ENCODE measurements at regions of chr6 and their contacts with region 1.

Region 1: GRCh38 chr6:142819603-142820337 is 125.2 kb downstream of the HIVEP2 start:
- DNase-seq: peak; percentile 45 to 84 (median 52)
- H3K4me3 ChIP-seq: peak overlapping the region; percentile 37 to 48
- H3K4me3 Mint-ChIP-seq: peak overlapping the region; percentile 76 to 92 (median 90)
- H3K27ac ChIP-seq: peak overlapping the region; percentile 76
- H3K27ac Mint-ChIP-seq: peak overlapping the region; percentile 87 to 100 (median 94)
- H3K4me1 ChIP-seq: peaks cover 88% of the 10 kb centered on the region
- H3K4me1 Mint-ChIP-seq: peaks cover 62 to 84% (median 71%) of the 10 kb centered on the region in 4 donors
- H3K27me3 ChIP-seq: no peaks in the 10 kb centered on the region
- H3K27me3 Mint-ChIP-seq: peaks cover 0 to 3% of the 10 kb centered on the region in 2 donors

Region 2: GRCh38 chr6:142784344-142784743 is 35.4 kb before region 1 on chr6:
- CTCF ChIA-PET with region 1: no interaction called
- POLR2A ChIA-PET with region 1: interaction called, 4 read pairs
- intact Hi-C with region 1: loop called (anchors 5 kb)
- DNase-seq: no peak
- H3K4me3 ChIP-seq: no peak overlapping the region
- H3K4me3 Mint-ChIP-seq: peak overlapping the region in 2 of 8 donors; percentile 24 to 78
- H3K27ac ChIP-seq: no peak overlapping the region
- H3K27ac Mint-ChIP-seq: peak overlapping the region; percentile 48 to 89 (median 60)
- H3K4me1 ChIP-seq: peaks cover 78% of the 10 kb centered on the region
- H3K4me1 Mint-ChIP-seq: peaks cover 40 to 73% (median 58%) of the 10 kb centered on the region in 4 donors
- H3K27me3 ChIP-seq: no peaks in the 10 kb centered on the region
- H3K27me3 Mint-ChIP-seq: no peaks in the 10 kb centered on the region

Region 3: GRCh38 chr6:142833054-142833453 is 13.3 kb after region 1 on chr6:
- CTCF ChIA-PET with region 1: interaction called, 16 read pairs
- POLR2A ChIA-PET with region 1: interaction called, 19 read pairs
- intact Hi-C with region 1: no loop called
- DNase-seq: no peak
- H3K4me3 ChIP-seq: no peak overlapping the region
- H3K4me3 Mint-ChIP-seq: peak overlapping the region in 5 of 8 donors; percentile 8 to 68 (median 38)
- H3K27ac ChIP-seq: no peak overlapping the region
- H3K27ac Mint-ChIP-seq: peak overlapping the region in 4 of 7 donors; percentile 15 to 77 (median 68)
- H3K4me1 ChIP-seq: peaks cover 53% of the 10 kb centered on the region
- H3K4me1 Mint-ChIP-seq: peaks cover 60 to 83% (median 73%) of the 10 kb centered on the region in 4 donors
- H3K27me3 ChIP-seq: no peaks in the 10 kb centered on the region
- H3K27me3 Mint-ChIP-seq: no peaks in the 10 kb centered on the region

Region 4: DNA sequence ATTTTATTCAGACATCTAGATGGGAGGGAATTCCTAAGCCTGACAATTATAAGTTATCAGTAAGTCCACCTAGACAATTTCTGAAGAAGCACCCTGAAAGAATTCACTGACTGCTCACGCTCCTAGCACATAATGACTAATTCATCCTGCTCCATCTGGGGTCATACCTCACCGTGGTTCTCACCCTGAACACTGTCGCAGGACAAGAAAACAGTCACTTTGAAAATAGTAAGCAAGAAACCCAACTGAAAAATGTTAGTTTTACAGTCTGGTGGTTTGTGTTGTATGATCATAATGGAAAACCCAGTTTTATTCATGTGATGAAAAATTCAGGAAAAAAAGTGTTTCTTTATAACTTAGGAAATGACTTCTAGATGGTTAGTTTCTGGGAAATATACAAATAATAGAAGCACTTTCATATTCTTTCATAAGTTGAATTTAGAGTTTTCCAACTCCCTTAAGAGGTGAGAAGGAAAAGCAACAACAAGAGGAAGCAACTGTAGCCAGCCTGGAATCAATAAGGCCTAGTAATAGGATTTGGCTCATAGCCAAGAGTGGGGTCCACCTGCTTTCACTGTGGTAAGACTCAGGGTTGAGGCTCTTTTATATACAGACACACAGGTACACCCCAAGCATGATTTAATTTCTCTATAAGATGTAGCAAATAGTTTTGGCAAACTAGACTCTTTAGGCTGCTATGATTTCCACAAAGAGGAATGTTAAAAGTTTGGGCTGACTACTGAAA is 31.1 kb after region 1 on chr6:
- CTCF ChIA-PET with region 1: interaction called, 7 read pairs
- POLR2A ChIA-PET with region 1: interaction called, 27 read pairs
- intact Hi-C with region 1: loop called (anchors 5 kb)
- DNase-seq: peak in 1 of 5 donors; percentile 76
- H3K4me3 ChIP-seq: no peak overlapping the region
- H3K4me3 Mint-ChIP-seq: peak overlapping the region; percentile 62 to 86 (median 78)
- H3K27ac ChIP-seq: peak overlapping the region; percentile 46
- H3K27ac Mint-ChIP-seq: peak overlapping the region; percentile 88 to 96 (median 94)
- H3K4me1 ChIP-seq: peaks cover 100% of the 10 kb centered on the region
- H3K4me1 Mint-ChIP-seq: peaks cover 83 to 100% (median 92%) of the 10 kb centered on the region in 4 donors
- H3K27me3 ChIP-seq: no peaks in the 10 kb centered on the region
- H3K27me3 Mint-ChIP-seq: no peaks in the 10 kb centered on the region

Region 5: DNA sequence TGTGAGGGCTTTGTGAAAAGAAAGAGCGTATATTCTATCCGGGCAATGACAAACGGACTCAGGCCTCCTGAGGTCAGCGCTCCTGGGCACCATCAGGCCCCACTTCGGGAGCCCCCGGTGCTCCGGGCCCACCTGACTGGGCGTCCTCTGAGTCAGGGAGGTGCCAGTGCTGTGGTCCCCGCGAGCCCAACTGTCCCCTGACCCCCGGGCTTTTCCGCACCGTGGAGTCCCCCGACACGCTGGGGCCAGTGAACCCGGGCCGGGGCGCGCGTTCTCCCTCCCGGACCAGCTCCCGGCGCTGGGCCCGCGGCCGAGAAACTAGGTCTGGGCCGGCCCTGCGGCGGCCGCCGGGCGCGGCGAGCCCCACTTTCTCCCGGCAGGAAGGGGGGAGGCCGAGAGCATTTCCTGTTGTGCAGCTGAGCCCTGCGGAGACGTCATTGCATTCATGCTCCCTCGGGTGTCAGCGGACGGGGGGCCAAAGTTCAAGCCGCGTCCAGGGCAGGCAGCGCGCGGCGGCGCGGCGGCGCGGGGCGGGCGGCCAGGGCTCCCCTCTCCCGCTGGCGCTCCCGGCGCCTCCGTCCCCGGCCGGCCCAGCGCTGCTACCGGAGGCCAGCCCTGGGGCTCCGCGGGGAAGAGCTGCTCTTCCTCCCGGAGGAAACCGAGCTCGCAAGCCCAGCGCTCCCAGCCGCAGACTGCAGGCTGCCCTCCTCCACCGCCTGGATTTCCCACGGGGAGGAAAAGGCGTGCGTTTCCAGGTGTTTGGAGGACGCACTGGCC is 106.9 kb after region 1 on chr6:
- CTCF ChIA-PET with region 1: no interaction called
- POLR2A ChIA-PET with region 1: interaction called, 13 read pairs
- intact Hi-C with region 1: no loop called
- DNase-seq: peak; percentile 82 to 87 (median 86)
- H3K4me3 ChIP-seq: peak overlapping the region; percentile 82 to 86
- H3K4me3 Mint-ChIP-seq: peak overlapping the region; percentile 88 to 99 (median 94)
- H3K27ac ChIP-seq: peak overlapping the region; percentile 98
- H3K27ac Mint-ChIP-seq: peak overlapping the region; percentile 90 to 100 (median 98)
- H3K4me1 ChIP-seq: peaks cover 60% of the 10 kb centered on the region
- H3K4me1 Mint-ChIP-seq: peaks cover 42 to 77% (median 56%) of the 10 kb centered on the region in 4 donors
- H3K27me3 ChIP-seq: no peaks in the 10 kb centered on the region
- H3K27me3 Mint-ChIP-seq: no peaks in the 10 kb centered on the region

Region 6: DNA sequence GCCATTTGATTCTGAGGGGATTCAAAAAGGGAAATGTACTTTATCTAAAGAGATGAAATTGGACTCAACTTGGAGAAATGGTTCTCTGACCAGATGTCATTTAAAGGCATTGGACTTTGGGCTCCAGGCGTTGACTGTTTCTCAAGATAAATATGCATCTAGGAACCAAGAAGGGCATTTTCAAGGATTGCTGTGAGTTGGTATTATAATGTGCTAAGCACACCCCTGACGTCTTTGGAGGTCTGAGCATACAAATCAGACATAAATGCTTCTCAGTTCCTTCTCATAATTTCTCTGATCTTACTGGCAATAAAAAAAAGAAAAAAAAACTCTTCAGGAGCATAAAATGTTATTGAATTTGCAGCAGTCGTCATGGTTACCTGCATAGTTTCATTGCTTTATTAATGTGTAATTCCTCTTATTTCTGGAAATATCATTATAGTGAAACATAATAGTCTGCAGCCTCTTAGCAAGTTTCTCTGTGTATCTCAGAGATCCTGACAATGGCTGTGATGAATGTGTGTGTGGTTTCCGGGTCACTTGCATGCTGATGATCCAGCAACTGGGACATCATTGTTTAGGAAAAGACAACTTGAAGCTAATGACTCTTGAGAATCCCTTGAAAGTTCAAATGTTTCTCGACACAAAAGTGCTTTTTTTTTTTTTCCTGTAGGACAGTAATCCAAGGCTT is 376.9 kb after region 1 on chr6:
- CTCF ChIA-PET with region 1: no interaction called
- POLR2A ChIA-PET with region 1: no interaction called
- intact Hi-C with region 1: no loop called
- DNase-seq: no peak
- H3K4me3 ChIP-seq: no peak overlapping the region
- H3K4me3 Mint-ChIP-seq: no peak overlapping the region
- H3K27ac ChIP-seq: no peak overlapping the region
- H3K27ac Mint-ChIP-seq: no peak overlapping the region
- H3K4me1 ChIP-seq: no peaks in the 10 kb centered on the region
- H3K4me1 Mint-ChIP-seq: no peaks in the 10 kb centered on the region
- H3K27me3 ChIP-seq: no peaks in the 10 kb centered on the region
- H3K27me3 Mint-ChIP-seq: no peaks in the 10 kb centered on the region

Measured in CD4-positive, alpha-beta memory T cell (primary cell).